CD14-positive monocyte (primary cell): ENCODE measurements at regions of chr17 and their contacts with region 1.

Region 1: DNA sequence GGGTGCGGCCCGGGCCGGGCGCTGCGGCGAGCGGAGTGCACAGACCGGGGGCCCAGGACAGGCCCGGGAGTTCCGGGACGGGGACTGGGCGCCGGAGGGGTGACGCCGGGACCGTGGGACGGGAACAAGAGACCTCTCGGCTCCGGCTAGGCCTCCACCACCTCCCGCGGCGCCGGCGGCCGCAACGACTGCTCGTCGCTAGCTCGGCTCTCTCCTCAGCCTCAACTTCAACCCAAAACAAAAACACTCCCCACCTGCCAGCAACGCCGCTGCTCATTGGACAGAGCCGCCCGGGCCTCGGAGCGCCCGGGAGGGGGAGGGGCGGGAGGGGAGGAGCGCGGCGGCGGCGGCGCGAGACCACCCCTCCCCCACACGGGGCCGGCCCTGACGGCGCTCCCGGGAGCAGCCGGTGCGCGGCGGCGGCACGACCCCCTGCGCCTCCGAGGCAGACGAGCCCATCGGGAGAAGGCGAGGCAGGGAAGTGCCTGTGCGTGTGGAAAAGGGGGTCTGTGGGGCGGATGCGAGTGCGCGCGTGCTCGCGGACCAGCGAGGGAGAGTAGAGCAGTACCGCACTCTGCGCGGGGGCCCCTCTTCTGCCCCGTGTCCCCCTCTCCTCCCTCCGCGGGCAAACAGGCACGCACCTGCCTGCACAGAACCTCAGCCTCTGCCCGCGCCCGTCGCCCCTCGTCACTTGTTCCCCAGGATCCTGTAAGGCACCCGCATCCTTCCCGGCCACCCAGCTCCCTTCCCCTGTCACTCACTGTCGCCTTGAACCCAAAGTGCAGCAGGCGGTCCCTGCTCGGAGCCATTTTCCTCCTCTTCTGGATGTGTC is at the start of gene FBXL20:
- DNase-seq: peak; percentile 77 to 83 (median 81)
- H3K4me3 ChIP-seq: peak within 1 kb of the TSS; percentile 90 to 95 (median 95)
- H3K4me3 Mint-ChIP-seq: peak within 1 kb of the TSS; percentile 99
- H3K27ac ChIP-seq: peak within 1 kb of the TSS; percentile 65 to 77
- H3K27ac Mint-ChIP-seq: peak within 1 kb of the TSS; percentile 90 to 96 (median 95)
- H3K4me1 ChIP-seq: peaks cover 15 to 16% of the 10 kb centered on the region in 2 donors
- H3K4me1 Mint-ChIP-seq: peaks cover 30% of the 10 kb centered on the region
- H3K27me3 ChIP-seq: no peaks in the 10 kb centered on the region
- H3K27me3 Mint-ChIP-seq: peaks cover 0 to 3% (median 0%) of the 10 kb centered on the region in 3 donors
- CTCF ChIP-seq: no peak
- polyA plus RNA-seq, gene FBXL20: 4.0 to 7.7 (median 4.7) TPM

Region 2: GRCh38 chr17:39270923-39271322 is 130.7 kb before region 1 on chr17:
- intact Hi-C with region 1: loop called in 1 of 2 experiments (anchors 5 kb)
- DNase-seq: peak; percentile 3 to 27 (median 22)
- H3K4me3 ChIP-seq: no peak overlapping the region
- H3K4me3 Mint-ChIP-seq: no peak overlapping the region
- H3K27ac ChIP-seq: no peak overlapping the region
- H3K27ac Mint-ChIP-seq: no peak overlapping the region
- H3K4me1 ChIP-seq: no peaks in the 10 kb centered on the region
- H3K4me1 Mint-ChIP-seq: peaks cover 2% of the 10 kb centered on the region
- H3K27me3 ChIP-seq: no peaks in the 10 kb centered on the region
- H3K27me3 Mint-ChIP-seq: no peaks in the 10 kb centered on the region
- CTCF ChIP-seq: peak; percentile 57

Region 3: GRCh38 chr17:39365242-39365641 is 36.4 kb before region 1 on chr17:
- intact Hi-C with region 1: loop called in 1 of 2 experiments (anchors 1 kb)
- DNase-seq: peak; percentile 24 to 72 (median 54)
- H3K4me3 ChIP-seq: peak overlapping the region in 2 of 3 experiments; percentile 36 to 69
- H3K4me3 Mint-ChIP-seq: peak overlapping the region; percentile 56 to 76
- H3K27ac ChIP-seq: peak overlapping the region in 1 of 2 donors; percentile 81
- H3K27ac Mint-ChIP-seq: peak overlapping the region; percentile 85 to 95 (median 92)
- H3K4me1 ChIP-seq: peaks cover 58 to 62% of the 10 kb centered on the region in 2 donors
- H3K4me1 Mint-ChIP-seq: peaks cover 48% of the 10 kb centered on the region
- H3K27me3 ChIP-seq: no peaks in the 10 kb centered on the region
- H3K27me3 Mint-ChIP-seq: peaks cover 0 to 3% (median 0%) of the 10 kb centered on the region in 3 donors
- CTCF ChIP-seq: no peak

Region 4: GRCh38 chr17:39450847-39451581 is 49.4 kb after region 1 on chr17 and contains the start of gene MED1:
- intact Hi-C with region 1: loop called in 1 of 2 experiments (anchors 2 kb)
- DNase-seq: peak; percentile 97 to 100 (median 98)
- H3K4me3 ChIP-seq: peak within 1 kb of the TSS; percentile 80 to 97 (median 88)
- H3K4me3 Mint-ChIP-seq: peak within 1 kb of the TSS; percentile 92 to 95
- H3K27ac ChIP-seq: peak within 1 kb of the TSS; percentile 82 to 89
- H3K27ac Mint-ChIP-seq: peak within 1 kb of the TSS; percentile 92 to 97 (median 95)
- H3K4me1 ChIP-seq: peaks cover 12 to 16% of the 10 kb centered on the region in 2 donors
- H3K4me1 Mint-ChIP-seq: peaks cover 15% of the 10 kb centered on the region
- H3K27me3 ChIP-seq: no peaks in the 10 kb centered on the region
- H3K27me3 Mint-ChIP-seq: peaks cover 0 to 2% (median 0%) of the 10 kb centered on the region in 3 donors
- CTCF ChIP-seq: no peak
- polyA plus RNA-seq, gene MED1: 5.0 to 9.1 (median 7.6) TPM